Activated B cell treated with CpG ODN at 0.5 μM for 24 hours (primary cell): ENCODE measurements at regions of chr3 and their contacts with region 1.

Region 1: GRCh38 chr3:105366326-105367062 is at the start of gene ALCAM:
- DNase-seq: peak; percentile 80
- ATAC-seq: peak; percentile 62
- H3K4me3 Mint-ChIP-seq: peak within 1 kb of the TSS; percentile 97
- H3K27ac Mint-ChIP-seq: peak within 1 kb of the TSS; percentile 99
- H3K4me1 Mint-ChIP-seq: peaks cover 33% of the 10 kb centered on the region
- H3K27me3 Mint-ChIP-seq: no peaks in the 10 kb centered on the region
- CTCF ChIP-seq: no peak
- total RNA-seq, gene ALCAM: 27.6 and 28.5 TPM in 2 replicates

Region 2: DNA sequence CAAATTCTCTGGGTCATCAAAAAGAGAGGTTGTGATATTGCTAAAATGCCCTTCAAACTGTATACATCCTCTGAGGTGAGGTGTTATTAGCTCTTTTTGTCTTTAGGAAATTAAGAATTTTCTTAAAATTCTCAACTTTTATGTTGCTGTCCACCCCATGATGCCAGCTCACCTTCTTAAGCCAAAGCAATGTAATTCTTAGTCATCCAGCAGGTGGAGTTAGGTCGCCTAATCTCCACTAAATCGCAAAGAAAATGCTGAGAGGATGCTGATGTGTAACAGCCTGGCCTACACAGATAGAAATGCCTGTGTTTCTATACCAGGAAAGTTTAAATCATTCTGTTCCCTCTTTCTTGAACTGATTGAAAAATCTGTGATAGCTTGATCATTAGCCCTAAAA is 769.9 kb before region 1 on chr3:
- CTCF ChIA-PET with region 1: interaction called, 23 read pairs
- POLR2A ChIA-PET with region 1: no interaction called
- intact Hi-C with region 1: loop called (anchors 1 kb)
- DNase-seq: no peak
- ATAC-seq: peak; percentile 67
- H3K4me3 Mint-ChIP-seq: no peak overlapping the region
- H3K27ac Mint-ChIP-seq: no peak overlapping the region
- H3K4me1 Mint-ChIP-seq: peaks cover 3% of the 10 kb centered on the region
- H3K27me3 Mint-ChIP-seq: no peaks in the 10 kb centered on the region
- CTCF ChIP-seq: no peak

Region 3: DNA sequence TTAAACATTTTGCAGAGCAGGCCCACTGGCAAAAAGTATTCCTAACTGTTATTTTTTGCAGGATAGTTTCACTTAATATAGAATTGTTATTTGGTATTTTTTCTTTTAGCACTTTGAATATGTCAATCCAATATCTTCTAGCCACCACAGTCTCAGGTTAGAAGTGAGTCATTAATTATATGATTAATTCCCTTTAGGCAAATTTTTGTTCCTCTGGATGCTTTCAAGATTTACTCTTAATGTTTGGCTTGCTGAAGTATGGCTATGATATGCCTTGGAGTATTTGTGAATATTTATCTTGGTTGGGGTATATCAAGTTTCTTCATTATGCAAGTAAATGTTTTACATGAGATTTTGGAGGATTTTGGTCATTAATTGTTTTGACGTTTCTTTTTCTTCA is 151.9 kb before region 1 on chr3:
- CTCF ChIA-PET with region 1: no interaction called
- POLR2A ChIA-PET with region 1: no interaction called
- intact Hi-C with region 1: loop called (anchors 5 kb)
- DNase-seq: no peak
- ATAC-seq: no peak
- H3K4me3 Mint-ChIP-seq: no peak overlapping the region
- H3K27ac Mint-ChIP-seq: no peak overlapping the region
- H3K4me1 Mint-ChIP-seq: no peaks in the 10 kb centered on the region
- H3K27me3 Mint-ChIP-seq: peaks cover 5% of the 10 kb centered on the region
- CTCF ChIP-seq: no peak

Region 4: DNA sequence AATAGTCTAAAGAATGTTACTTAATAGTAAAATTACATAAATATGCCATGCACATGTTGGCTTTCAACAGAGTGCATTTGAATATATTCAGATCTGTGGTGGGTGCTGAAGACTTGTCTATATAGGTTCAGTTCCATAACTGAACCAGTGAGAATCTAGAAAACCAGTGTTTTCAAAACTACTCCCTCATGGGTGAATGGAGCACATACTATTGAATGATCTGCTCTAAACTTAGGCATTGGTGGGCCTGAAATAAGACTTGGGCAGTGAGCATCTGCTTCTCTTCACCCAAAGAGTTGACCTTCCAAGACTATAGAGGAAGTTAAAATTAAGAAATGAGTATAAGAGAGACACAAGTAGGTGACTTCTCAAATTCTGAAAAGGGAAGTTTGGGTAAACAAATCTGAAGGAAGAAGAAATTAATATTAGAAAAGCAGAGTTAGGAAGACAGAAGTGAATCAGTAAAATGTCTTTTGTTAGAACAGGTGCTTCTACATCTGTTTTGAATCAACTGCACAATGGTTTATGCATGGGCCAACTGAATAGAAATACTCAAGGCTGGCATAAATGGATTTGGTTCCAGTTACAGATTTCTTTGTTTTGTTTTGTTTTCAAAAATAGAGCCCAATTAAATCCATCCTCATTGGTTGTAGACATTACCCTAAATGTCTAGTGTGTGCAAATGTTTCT is 19.5 kb after region 1 on chr3:
- CTCF ChIA-PET with region 1: no interaction called
- POLR2A ChIA-PET with region 1: interaction called, 3 read pairs
- intact Hi-C with region 1: loop called (anchors 1 kb)
- DNase-seq: no peak
- ATAC-seq: peak; percentile 83
- H3K4me3 Mint-ChIP-seq: peak overlapping the region; percentile 7
- H3K27ac Mint-ChIP-seq: peak overlapping the region; percentile 69
- H3K4me1 Mint-ChIP-seq: peaks cover 38% of the 10 kb centered on the region
- H3K27me3 Mint-ChIP-seq: no peaks in the 10 kb centered on the region
- CTCF ChIP-seq: no peak

Region 5: DNA sequence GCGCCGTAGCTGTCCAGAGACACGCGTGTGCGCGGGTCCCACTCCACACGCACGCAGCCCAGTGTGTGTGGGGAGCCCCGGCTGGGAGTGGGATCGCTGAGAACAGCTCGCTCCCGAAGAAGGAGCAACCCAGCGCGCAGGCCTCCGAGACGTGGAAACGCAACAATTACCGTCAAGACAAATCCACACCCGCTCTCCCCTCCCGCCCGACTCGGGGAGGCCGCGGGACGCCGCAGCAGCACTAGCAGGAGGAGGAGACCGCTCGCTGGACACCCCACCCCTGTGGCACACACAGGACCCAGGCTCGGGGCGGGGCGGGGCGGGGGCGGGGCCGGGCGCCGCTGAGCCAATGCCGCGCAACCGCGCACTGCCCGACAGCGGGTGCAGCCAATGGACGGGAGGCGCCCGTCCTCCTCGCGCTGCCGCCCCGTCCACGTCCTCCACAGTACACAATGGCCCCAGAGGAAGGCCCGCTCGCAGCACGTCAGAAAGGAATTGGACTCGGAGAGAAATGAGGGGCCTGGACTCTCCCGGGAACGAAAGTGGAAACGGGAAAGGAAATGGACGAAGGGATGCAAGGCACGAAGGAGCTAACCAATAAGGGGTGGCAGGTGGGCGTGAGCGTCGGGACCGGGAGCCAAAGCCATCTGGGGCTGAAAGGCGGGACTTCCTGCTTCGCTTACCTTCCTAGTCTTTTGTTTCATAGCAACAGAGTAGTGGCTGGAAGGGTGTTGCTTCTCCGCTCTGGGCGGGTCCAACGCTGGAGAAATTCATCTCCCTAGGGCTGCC is 502.4 kb after region 1 on chr3 and contains the start of gene CBLB:
- CTCF ChIA-PET with region 1: no interaction called
- POLR2A ChIA-PET with region 1: no interaction called
- intact Hi-C with region 1: loop called (anchors 2 kb)
- DNase-seq: peak; percentile 78
- ATAC-seq: peak; percentile 93
- H3K4me3 Mint-ChIP-seq: peak within 1 kb of the TSS; percentile 100
- H3K27ac Mint-ChIP-seq: peak within 1 kb of the TSS; percentile 99
- H3K4me1 Mint-ChIP-seq: peaks cover 53% of the 10 kb centered on the region
- H3K27me3 Mint-ChIP-seq: no peaks in the 10 kb centered on the region
- CTCF ChIP-seq: no peak
- total RNA-seq, gene CBLB: 69.2 and 78.1 TPM in 2 replicates

Region 6: DNA sequence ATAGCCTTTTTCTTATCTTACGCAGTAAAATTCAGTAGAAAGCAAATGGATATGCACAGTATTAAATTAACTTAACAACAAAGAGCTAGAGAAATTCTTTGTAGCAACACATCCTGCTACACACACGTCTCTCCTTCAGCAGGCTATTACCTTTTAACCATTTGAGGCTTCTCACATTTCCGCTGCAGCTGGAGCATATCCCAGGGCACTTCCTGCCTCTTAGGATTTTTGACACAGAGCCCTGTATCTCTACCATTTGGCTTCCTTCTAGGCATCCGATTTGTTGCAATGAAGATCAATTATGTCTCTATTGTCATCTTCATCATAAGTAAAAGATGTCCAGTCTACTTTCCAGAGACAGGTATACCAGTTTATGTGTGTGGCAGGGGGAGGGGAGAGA is 794.8 kb after region 1 on chr3:
- CTCF ChIA-PET with region 1: no interaction called
- POLR2A ChIA-PET with region 1: no interaction called
- intact Hi-C with region 1: no loop called
- DNase-seq: no peak
- ATAC-seq: no peak
- H3K4me3 Mint-ChIP-seq: no peak overlapping the region
- H3K27ac Mint-ChIP-seq: no peak overlapping the region
- H3K4me1 Mint-ChIP-seq: no peaks in the 10 kb centered on the region
- H3K27me3 Mint-ChIP-seq: no peaks in the 10 kb centered on the region
- CTCF ChIP-seq: no peak

Region 7: DNA sequence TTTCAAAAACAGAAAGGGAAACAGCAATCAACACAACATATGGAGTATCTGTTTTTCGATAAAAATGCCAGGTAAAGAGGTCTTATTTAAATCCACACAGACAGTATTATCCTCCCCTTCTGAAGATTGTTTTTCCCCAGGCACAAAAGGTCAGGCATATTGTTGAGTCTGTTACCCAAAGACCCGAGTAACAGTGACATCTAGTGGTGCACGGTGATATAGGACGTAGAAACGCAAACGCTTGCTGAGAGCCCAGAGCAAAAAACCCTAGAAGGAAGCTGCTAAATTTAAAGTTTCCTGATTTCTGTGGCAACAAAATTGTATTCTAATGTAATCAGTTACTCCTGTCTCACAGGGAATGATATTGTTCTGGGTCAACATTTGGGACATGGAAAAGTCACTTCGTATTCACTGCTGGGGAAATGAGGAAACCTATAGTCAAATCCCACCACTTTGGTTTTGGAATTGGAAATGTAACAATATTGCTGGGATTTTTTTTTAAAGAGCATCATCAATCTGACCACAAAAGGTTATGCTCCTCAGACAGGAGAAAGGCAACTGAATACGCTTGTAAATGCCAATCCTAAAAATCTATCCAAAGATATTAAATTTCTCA is 1698.1 kb after region 1 on chr3:
- CTCF ChIA-PET with region 1: no interaction called
- POLR2A ChIA-PET with region 1: no interaction called
- intact Hi-C with region 1: loop called (anchors 2 kb)
- DNase-seq: no peak
- ATAC-seq: peak; percentile 78
- H3K4me3 Mint-ChIP-seq: no peak overlapping the region
- H3K27ac Mint-ChIP-seq: no peak overlapping the region
- H3K4me1 Mint-ChIP-seq: peaks cover 4% of the 10 kb centered on the region
- H3K27me3 Mint-ChIP-seq: peaks cover 3% of the 10 kb centered on the region
- CTCF ChIP-seq: peak; percentile 63